ENCODE measurements at regions of chrX and their contacts with region 1.

Region 1: GRCh38 chrX:98254407-98254806 is 1370.7 kb downstream of the RPA4 start:
- DNase-seq: no peak
- ATAC-seq: no peak
- H3K4me3 Mint-ChIP-seq: no peak overlapping the region
- H3K27ac Mint-ChIP-seq: no peak overlapping the region
- H3K4me1 Mint-ChIP-seq: no peaks in the 10 kb centered on the region
- H3K27me3 Mint-ChIP-seq: no peaks in the 10 kb centered on the region

Region 2: GRCh38 chrX:98111684-98112083 is 142.7 kb before region 1 on chrX:
- CTCF ChIA-PET with region 1: no interaction called
- POLR2A ChIA-PET with region 1: no interaction called
- intact Hi-C with region 1: no loop called
- DNase-seq: no peak
- ATAC-seq: no peak
- H3K4me3 Mint-ChIP-seq: no peak overlapping the region
- H3K27ac Mint-ChIP-seq: no peak overlapping the region
- H3K4me1 Mint-ChIP-seq: no peaks in the 10 kb centered on the region
- H3K27me3 Mint-ChIP-seq: no peaks in the 10 kb centered on the region

Region 3: DNA sequence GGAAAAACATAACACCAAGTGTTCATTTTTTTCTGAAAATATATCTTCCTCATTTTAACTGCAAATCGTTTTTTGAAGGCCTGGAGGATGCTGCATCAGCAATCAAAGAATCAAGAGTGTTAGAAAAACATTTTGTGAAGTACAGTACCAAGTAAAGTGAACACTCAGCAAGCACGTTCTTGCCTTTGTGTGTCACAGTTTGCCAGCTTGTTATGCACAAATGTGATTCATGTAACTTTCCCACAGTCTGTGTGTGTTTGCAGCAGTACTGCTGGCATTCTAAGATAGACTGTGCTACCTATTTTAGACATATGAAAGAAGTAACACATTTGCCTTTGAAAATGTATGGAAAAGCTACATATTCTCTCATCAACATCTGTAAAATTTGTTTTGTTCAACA is 247.0 kb after region 1 on chrX:
- CTCF ChIA-PET with region 1: no interaction called
- POLR2A ChIA-PET with region 1: interaction called, 10 read pairs
- intact Hi-C with region 1: no loop called
- DNase-seq: no peak
- ATAC-seq: no peak
- H3K4me3 Mint-ChIP-seq: no peak overlapping the region
- H3K27ac Mint-ChIP-seq: no peak overlapping the region
- H3K4me1 Mint-ChIP-seq: no peaks in the 10 kb centered on the region
- H3K27me3 Mint-ChIP-seq: no peaks in the 10 kb centered on the region

Measured in activated CD4-positive, alpha-beta T cell treated with anti-CD3 and anti-CD28 coated beads for 36 hours (primary cell).